Dendritic cell treated with granulocyte-macrophage colony-stimulating factor and Interleukin-4, amounts not matched to agents 40 ng/mL and 50 ng/mL, for 4 days (primary cell): ENCODE measurements at regions of chr14 and their contacts with region 1.

Region 1: GRCh38 chr14:95157327-95158189 is at the start of gene DICER1:
- H3K4me3 Mint-ChIP-seq: peak within 1 kb of the TSS; percentile 85
- H3K27ac Mint-ChIP-seq: peak within 1 kb of the TSS; percentile 98
- H3K4me1 Mint-ChIP-seq: peaks cover 66% of the 10 kb centered on the region
- H3K27me3 Mint-ChIP-seq: no peaks in the 10 kb centered on the region

Region 2: GRCh38 chr14:95140060-95140858 is 17.3 kb before region 1 on chr14:
- intact Hi-C with region 1: loop called (anchors 2 kb)
- H3K4me3 Mint-ChIP-seq: no peak overlapping the region
- H3K27ac Mint-ChIP-seq: peak overlapping the region; percentile 62
- H3K4me1 Mint-ChIP-seq: peaks cover 37% of the 10 kb centered on the region
- H3K27me3 Mint-ChIP-seq: no peaks in the 10 kb centered on the region

Region 3: DNA sequence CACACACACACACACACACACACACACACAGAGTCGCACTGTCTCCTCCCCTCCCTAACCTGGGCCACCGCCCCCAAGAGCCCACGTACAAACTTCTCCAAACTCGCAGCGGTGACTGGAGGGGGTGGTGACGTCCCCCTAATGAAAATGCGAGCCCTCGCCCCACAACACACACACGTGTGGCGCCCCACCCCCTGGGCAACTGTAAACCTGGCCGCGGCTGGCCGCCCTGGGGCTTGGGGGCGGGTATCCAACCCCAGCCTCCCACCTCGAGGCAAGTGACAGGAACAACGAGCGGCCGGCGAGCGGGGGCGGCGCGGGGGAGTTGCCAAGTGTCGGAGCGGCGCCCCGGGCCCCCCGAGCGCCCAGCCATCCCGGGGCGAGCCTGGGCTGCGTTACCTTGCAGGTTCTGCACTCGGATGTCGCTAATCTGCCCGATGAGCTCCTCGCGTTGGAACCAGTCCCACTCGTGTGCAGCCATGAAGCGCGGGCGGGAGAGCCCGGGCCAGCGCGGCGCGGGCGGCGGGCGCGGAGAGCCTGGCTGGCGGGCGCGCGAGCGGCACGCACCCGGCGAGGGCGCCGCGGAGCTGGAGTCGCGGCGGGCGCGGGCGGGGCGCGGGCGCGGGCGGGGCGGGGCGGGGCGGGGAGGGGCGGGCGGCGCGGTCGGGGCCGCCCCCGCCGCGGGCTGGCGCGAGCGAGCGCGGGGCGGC is 161.9 kb after region 1 on chr14 and contains the start of gene CLMN:
- intact Hi-C with region 1: loop called (anchors 10 kb)
- H3K4me3 Mint-ChIP-seq: peak within 1 kb of the TSS; percentile 85
- H3K27ac Mint-ChIP-seq: peak within 1 kb of the TSS; percentile 79
- H3K4me1 Mint-ChIP-seq: peaks cover 89% of the 10 kb centered on the region
- H3K27me3 Mint-ChIP-seq: peaks cover 7% of the 10 kb centered on the region

Region 4: GRCh38 chr14:96501742-96502617 is 1344.4 kb after region 1 on chr14 and contains the start of gene PAPOLA:
- intact Hi-C with region 1: loop called (anchors 10 kb)
- H3K4me3 Mint-ChIP-seq: peak within 1 kb of the TSS; percentile 97
- H3K27ac Mint-ChIP-seq: peak within 1 kb of the TSS; percentile 97
- H3K4me1 Mint-ChIP-seq: peaks cover 53% of the 10 kb centered on the region
- H3K27me3 Mint-ChIP-seq: no peaks in the 10 kb centered on the region